Naive thymus-derived CD4-positive, alpha-beta T cell (primary cell): ENCODE measurements at regions of chr17 and their contacts with region 1.

Region 1: DNA sequence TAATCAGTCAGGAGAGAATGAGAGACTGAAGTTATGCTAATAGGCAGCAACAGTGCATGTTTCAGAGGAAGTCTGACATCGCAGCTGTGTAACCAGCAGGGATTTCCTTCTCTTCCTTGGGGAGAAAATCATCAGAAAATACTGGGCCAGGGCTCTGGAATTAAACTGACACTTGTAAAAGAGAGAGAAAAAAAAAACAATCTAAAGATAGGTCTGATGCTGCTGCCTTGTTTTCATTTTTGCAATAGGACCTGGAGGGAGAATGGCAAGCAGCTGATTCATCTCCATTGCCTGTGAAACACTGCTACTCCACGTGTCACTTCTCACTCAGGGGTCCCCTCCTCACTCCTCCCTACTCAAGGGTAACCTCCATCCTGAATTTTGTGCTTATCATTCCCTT is 17.7 kb upstream of the CORO6 start:
- DNase-seq: no peak
- ATAC-seq: no peak
- H3K4me3 ChIP-seq: no peak overlapping the region
- H3K4me3 Mint-ChIP-seq: no peak overlapping the region
- H3K27ac ChIP-seq: no peak overlapping the region
- H3K27ac Mint-ChIP-seq: peak overlapping the region in 8 of 9 donors; percentile 40 to 88 (median 61)
- H3K4me1 ChIP-seq: no peaks in the 10 kb centered on the region
- H3K4me1 Mint-ChIP-seq: peaks cover 0 to 35% (median 19%) of the 10 kb centered on the region in 7 donors
- H3K27me3 ChIP-seq: no peaks in the 10 kb centered on the region
- H3K27me3 Mint-ChIP-seq: no peaks in the 10 kb centered on the region

Region 2: GRCh38 chr17:29682054-29682453 is 41.6 kb after region 1 on chr17:
- CTCF ChIA-PET with region 1: no interaction called
- POLR2A ChIA-PET with region 1: no interaction called
- intact Hi-C with region 1: loop called in 1 of 2 experiments (anchors 5 kb)
- DNase-seq: peak in 2 of 9 donors; percentile 15 to 17
- ATAC-seq: peak; percentile 76
- H3K4me3 ChIP-seq: no peak overlapping the region
- H3K4me3 Mint-ChIP-seq: peak overlapping the region in 3 of 10 donors; percentile 0 to 7 (median 2)
- H3K27ac ChIP-seq: no peak overlapping the region
- H3K27ac Mint-ChIP-seq: peak overlapping the region in 7 of 9 donors; percentile 21 to 80 (median 43)
- H3K4me1 ChIP-seq: peaks cover 0 to 9% of the 10 kb centered on the region in 2 donors
- H3K4me1 Mint-ChIP-seq: peaks cover 12 to 51% (median 28%) of the 10 kb centered on the region in 7 donors
- H3K27me3 ChIP-seq: no peaks in the 10 kb centered on the region
- H3K27me3 Mint-ChIP-seq: no peaks in the 10 kb centered on the region

Region 3: DNA sequence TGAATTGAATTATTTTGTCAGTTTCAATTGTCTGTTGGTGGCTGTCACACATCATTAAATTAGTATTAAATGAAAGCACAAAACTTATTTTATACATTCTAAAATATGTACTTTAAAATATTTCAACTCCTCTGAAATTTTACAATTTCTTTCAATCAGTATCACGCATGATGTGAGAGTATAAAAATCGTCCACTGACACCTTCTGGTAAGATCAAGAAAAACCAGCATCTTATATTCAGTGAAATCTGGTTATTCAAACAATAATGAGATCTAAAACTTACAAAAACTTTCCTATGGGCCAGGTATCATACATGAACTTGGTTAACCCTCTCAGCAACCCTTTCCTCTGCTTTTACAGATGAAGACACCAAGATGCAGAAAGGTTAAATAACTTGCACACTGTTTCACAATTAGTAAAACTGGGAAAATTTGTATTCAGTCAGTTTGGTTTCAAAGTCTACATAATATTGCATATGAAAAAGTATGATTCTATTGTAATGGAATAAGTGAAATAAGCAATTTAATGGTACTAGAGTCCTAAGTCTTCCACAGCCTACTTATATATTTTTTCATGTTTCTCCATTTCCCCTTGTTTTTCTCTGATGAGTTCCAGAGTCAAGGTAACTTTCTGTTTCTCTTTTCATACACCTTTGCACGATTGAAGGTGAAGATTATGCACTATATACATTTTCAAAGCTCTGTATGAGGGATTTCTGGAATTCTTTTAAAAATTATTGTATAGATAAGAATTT is 359.8 kb after region 1 on chr17:
- CTCF ChIA-PET with region 1: no interaction called
- POLR2A ChIA-PET with region 1: no interaction called
- intact Hi-C with region 1: loop called in 1 of 2 experiments (anchors 5 kb)
- DNase-seq: peak in 2 of 9 donors; percentile 1 to 5
- ATAC-seq: no peak
- H3K4me3 ChIP-seq: no peak overlapping the region
- H3K4me3 Mint-ChIP-seq: peak overlapping the region in 9 of 10 donors; percentile 18 to 79 (median 56)
- H3K27ac ChIP-seq: no peak overlapping the region
- H3K27ac Mint-ChIP-seq: peak overlapping the region in 7 of 9 donors; percentile 12 to 81 (median 32)
- H3K4me1 ChIP-seq: no peaks in the 10 kb centered on the region
- H3K4me1 Mint-ChIP-seq: peaks cover 5 to 14% (median 13%) of the 10 kb centered on the region in 7 donors
- H3K27me3 ChIP-seq: no peaks in the 10 kb centered on the region
- H3K27me3 Mint-ChIP-seq: peaks cover 0 to 6% (median 0%) of the 10 kb centered on the region in 5 donors